ENCODE measurements at regions of chr4 and their contacts with region 1.

Region 1: DNA sequence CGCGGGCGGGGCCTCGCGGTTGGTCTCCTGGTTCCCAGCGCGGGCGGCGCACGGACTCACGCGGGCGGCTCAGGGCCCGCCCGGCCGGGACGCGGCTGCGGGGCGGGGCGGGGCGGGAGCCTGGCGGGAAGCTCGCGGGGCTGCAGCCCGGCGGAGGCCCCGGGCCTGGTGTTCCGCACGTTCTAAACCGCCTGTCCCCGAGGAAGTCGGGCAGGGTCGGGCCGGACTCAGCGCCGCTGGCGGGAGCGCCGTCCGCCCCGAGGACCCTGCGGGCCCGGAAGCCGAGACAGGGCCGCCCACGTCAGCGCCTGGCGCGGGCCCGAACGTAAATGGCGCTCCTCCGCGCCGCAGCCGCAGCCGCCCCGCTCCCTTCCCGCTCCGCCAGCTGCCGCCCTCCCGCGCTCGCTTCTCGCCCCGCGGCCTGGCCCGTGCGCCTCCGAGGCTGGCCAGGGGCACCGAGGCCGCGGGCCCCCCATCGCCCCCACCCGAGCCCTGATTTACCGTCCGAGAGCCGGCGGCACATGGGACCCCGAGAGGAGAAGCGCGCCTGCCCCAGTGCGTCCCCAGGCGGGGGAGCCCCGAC is 309 bp upstream of the CTBP1 start:
- DNase-seq: peak; percentile 63 to 98 (median 86)

Region 2: GRCh38 chr4:663438-664428 is 585.5 kb before region 1 on chr4:
- intact Hi-C with region 1: no loop called
- DNase-seq: peak in 8 of 10 donors; percentile 38 to 92 (median 65)

Region 3: GRCh38 chr4:781493-782216 is 467.6 kb before region 1 on chr4:
- intact Hi-C with region 1: loop called (anchors 5 kb)
- DNase-seq: peak; percentile 95 to 100 (median 99)

Region 4: GRCh38 chr4:1167247-1167949 is 81.8 kb before region 1 on chr4:
- intact Hi-C with region 1: loop called (anchors 5 kb)
- DNase-seq: peak; percentile 66 to 96 (median 80)

Region 5: GRCh38 chr4:1289207-1290164 is 40.2 kb after region 1 on chr4 and contains the start of gene MAEA:
- intact Hi-C with region 1: loop called (anchors 1 kb)
- DNase-seq: peak; percentile 96 to 100 (median 97)

Region 6: GRCh38 chr4:1346781-1347409 is 97.7 kb after region 1 on chr4 and contains the start of gene UVSSA:
- intact Hi-C with region 1: loop called (anchors 1 kb)
- DNase-seq: peak; percentile 100

Region 7: DNA sequence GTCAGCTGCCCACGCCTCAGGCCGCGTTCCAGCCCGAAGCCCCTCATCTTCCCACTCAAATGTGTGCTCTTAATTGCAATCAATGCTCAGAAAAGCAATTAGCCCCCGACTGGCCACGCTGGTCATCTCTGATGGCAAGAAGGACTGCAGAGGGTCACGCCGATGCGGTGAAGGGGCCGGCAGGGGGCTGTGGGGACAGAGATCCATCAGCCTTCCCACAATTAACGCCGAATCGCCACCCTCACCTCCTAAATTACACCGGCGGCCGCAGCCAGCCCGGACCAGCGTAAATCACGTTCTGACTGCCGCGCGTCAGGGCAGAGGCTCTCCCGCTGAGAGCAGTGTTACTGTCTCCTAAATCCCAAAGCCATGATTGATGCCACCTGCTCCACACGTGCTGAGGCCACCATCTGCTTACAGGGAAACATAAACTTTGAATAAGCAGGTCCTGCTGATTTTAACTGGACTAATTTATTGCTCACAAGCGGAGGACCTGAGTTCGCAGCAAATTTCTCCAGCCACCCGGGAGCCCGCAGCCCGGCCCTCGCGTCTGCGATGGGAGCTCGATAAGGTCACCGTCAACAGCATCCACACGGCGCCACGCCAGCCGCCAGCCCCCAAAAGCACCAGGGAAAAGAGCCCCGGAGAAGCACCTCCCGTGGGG is 284.3 kb after region 1 on chr4:
- intact Hi-C with region 1: no loop called
- DNase-seq: peak in 5 of 10 donors; percentile 2 to 79 (median 49)

Measured in posterior cingulate gyrus (tissue), 11 donors.